AG04449 (cell line): ENCODE measurements at regions of chr14 and their contacts with region 1.

Region 1: GRCh38 chr14:75141967-75142366 is 15.1 kb upstream of the NEK9 start:
- DNase-seq: no peak
- H3K4me3 ChIP-seq: no peak overlapping the region
- CTCF ChIP-seq: peak; percentile 28

Region 2: GRCh38 chr14:75126679-75127473 is 15.1 kb before region 1 on chr14 and contains the start of gene NEK9:
- CTCF ChIA-PET with region 1: interaction called, 48 read pairs
- POLR2A ChIA-PET with region 1: no interaction called
- DNase-seq: no peak
- H3K4me3 ChIP-seq: peak within 1 kb of the TSS; percentile 75
- CTCF ChIP-seq: no peak

Region 3: GRCh38 chr14:75188520-75189268 is 46.7 kb after region 1 on chr14:
- CTCF ChIA-PET with region 1: no interaction called
- POLR2A ChIA-PET with region 1: no interaction called
- DNase-seq: no peak
- H3K4me3 ChIP-seq: no peak overlapping the region
- CTCF ChIP-seq: no peak